ENCODE measurements at regions of chr14 and their contacts with region 1.

Region 1: DNA sequence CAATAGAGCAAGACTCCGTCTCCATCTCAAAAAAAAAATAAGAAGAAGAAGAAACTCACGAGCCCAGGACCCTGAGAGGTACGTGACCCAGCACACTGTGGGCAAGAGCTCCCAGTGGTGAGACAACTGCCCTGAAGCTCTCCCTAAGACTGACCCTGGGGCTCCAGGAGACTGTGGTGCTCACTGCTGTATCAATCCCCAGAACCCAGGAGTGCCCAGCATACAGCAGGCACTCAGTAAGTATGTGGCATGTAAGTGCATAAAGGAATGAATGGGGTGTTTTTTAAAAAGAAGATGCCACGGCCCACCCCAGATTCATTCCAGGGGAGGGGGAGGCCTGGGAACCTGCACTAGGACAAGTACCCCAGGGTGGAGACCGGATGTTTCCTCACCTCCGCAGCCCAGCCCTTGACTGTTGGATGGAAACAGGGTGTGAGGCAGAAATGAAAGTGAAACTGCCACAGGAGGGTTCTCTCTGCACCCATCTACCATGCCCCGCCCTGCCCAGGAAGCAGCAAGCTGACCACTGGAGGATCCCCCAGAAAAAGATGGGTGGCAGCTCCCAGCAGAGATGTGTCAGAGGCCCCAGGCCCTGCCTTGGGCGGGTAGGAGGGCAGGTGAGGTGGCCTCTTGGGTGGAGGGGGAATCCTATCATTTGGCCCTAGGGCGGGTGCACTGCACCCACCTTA is 12.2 kb downstream of the ITPK1 start:
- DNase-seq: peak in 8 of 9 donors; percentile 51 to 68 (median 66)
- ATAC-seq: peak; percentile 90
- H3K4me3 ChIP-seq: peak overlapping the region; percentile 64
- H3K4me3 Mint-ChIP-seq: peak overlapping the region; percentile 77 to 89 (median 84)
- H3K27ac ChIP-seq: peak overlapping the region; percentile 73
- H3K27ac Mint-ChIP-seq: peak overlapping the region; percentile 90 to 98 (median 94)
- H3K4me1 ChIP-seq: peaks cover 12 to 15% of the 10 kb centered on the region in 2 donors
- H3K4me1 Mint-ChIP-seq: peaks cover 15 to 60% (median 23%) of the 10 kb centered on the region in 7 donors
- H3K27me3 ChIP-seq: no peaks in the 10 kb centered on the region
- H3K27me3 Mint-ChIP-seq: no peaks in the 10 kb centered on the region

Region 2: GRCh38 chr14:93064411-93065323 is 38.9 kb before region 1 on chr14:
- CTCF ChIA-PET with region 1: interaction called, 4 read pairs
- POLR2A ChIA-PET with region 1: no interaction called
- intact Hi-C with region 1: loop called in 1 of 2 experiments (anchors 5 kb)
- DNase-seq: no peak
- ATAC-seq: no peak
- H3K4me3 ChIP-seq: no peak overlapping the region
- H3K4me3 Mint-ChIP-seq: peak overlapping the region in 1 of 10 donors; percentile 74
- H3K27ac ChIP-seq: no peak overlapping the region
- H3K27ac Mint-ChIP-seq: peak overlapping the region in 4 of 9 donors; percentile 45 to 93 (median 76)
- H3K4me1 ChIP-seq: peaks cover 11 to 21% of the 10 kb centered on the region in 2 donors
- H3K4me1 Mint-ChIP-seq: peaks cover 44 to 58% (median 54%) of the 10 kb centered on the region in 7 donors
- H3K27me3 ChIP-seq: no peaks in the 10 kb centered on the region
- H3K27me3 Mint-ChIP-seq: no peaks in the 10 kb centered on the region

Region 3: DNA sequence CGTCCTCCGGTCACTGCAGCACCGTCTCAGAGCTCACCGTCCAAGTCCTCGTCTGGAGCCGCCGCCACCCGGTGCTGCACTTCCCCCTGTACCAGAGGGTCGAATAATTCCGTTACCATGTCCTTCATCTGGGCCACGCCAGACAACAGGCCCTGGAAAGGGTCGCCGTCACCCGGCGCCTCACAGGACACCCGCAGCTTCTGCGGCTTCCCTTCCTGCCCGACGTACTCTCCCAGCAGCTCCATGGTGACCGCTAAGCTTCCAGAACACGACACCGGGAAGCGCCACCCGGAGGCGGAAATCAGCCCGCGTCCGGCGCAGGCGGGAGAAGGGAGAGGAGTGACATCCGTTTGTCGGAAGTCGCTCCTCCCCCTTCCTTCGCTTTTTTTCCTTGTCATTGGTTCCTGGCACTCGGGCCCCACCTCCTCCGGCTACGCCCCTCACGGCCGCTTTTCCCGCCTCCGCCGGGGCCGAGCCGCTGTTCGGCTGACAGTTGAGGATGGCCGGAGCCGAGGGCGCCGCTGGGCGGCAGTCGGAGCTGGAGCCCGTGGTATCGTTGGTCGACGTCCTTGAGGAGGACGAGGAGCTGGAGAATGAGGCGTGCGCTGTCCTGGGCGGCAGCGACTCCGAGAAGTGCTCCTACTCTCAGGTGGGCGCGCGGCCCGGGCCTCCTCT is 103.4 kb after region 1 on chr14 and contains the starts of genes GON7 and UBR7:
- CTCF ChIA-PET with region 1: no interaction called
- POLR2A ChIA-PET with region 1: no interaction called
- intact Hi-C with region 1: loop called in 1 of 2 experiments (anchors 1 kb)
- DNase-seq: peak; percentile 66 to 91 (median 83)
- ATAC-seq: peak; percentile 99
- H3K4me3 ChIP-seq: peak within 1 kb of the TSS; percentile 81
- H3K4me3 Mint-ChIP-seq: peak within 1 kb of the TSS; percentile 75 to 99 (median 94)
- H3K27ac ChIP-seq: peak within 1 kb of the TSS; percentile 87
- H3K27ac Mint-ChIP-seq: peak within 1 kb of the TSS; percentile 88 to 97 (median 93)
- H3K4me1 ChIP-seq: peaks cover 13 to 22% of the 10 kb centered on the region in 2 donors
- H3K4me1 Mint-ChIP-seq: peaks cover 22 to 65% (median 50%) of the 10 kb centered on the region in 7 donors
- H3K27me3 ChIP-seq: no peaks in the 10 kb centered on the region
- H3K27me3 Mint-ChIP-seq: no peaks in the 10 kb centered on the region
- total RNA-seq, gene GON7: 3.5 to 17.4 (median 8.3) TPM
- total RNA-seq, gene UBR7: 10.1 to 31.3 (median 13.5) TPM

Region 4: GRCh38 chr14:93994919-93995682 is 891.6 kb after region 1 on chr14:
- CTCF ChIA-PET with region 1: no interaction called
- POLR2A ChIA-PET with region 1: no interaction called
- intact Hi-C with region 1: no loop called
- DNase-seq: no peak
- ATAC-seq: no peak
- H3K4me3 ChIP-seq: no peak overlapping the region
- H3K4me3 Mint-ChIP-seq: no peak overlapping the region
- H3K27ac ChIP-seq: no peak overlapping the region
- H3K27ac Mint-ChIP-seq: no peak overlapping the region
- H3K4me1 ChIP-seq: no peaks in the 10 kb centered on the region
- H3K4me1 Mint-ChIP-seq: peaks cover 0 to 48% (median 1%) of the 10 kb centered on the region in 7 donors
- H3K27me3 ChIP-seq: no peaks in the 10 kb centered on the region
- H3K27me3 Mint-ChIP-seq: no peaks in the 10 kb centered on the region

Measured in naive thymus-derived CD4-positive, alpha-beta T cell (primary cell).